Calu3 (cell line): ENCODE measurements at regions of chr14 and their contacts with region 1.

Region 1: GRCh38 chr14:34502494-34503225 is 36.8 kb downstream of the EAPP start:
- DNase-seq: no peak
- H3K4me3 Mint-ChIP-seq: no peak overlapping the region
- H3K27ac Mint-ChIP-seq: no peak overlapping the region
- H3K4me1 Mint-ChIP-seq: peaks cover under 1% of the 10 kb centered on the region
- H3K27me3 Mint-ChIP-seq: no peaks in the 10 kb centered on the region
- CTCF ChIP-seq: no peak

Region 2: GRCh38 chr14:34270361-34270760 is 232.3 kb before region 1 on chr14:
- CTCF ChIA-PET with region 1: no interaction called
- intact Hi-C with region 1: no loop called
- DNase-seq: no peak
- H3K4me3 Mint-ChIP-seq: no peak overlapping the region
- H3K27ac Mint-ChIP-seq: no peak overlapping the region
- H3K4me1 Mint-ChIP-seq: no peaks in the 10 kb centered on the region
- H3K27me3 Mint-ChIP-seq: no peaks in the 10 kb centered on the region
- CTCF ChIP-seq: no peak

Region 3: DNA sequence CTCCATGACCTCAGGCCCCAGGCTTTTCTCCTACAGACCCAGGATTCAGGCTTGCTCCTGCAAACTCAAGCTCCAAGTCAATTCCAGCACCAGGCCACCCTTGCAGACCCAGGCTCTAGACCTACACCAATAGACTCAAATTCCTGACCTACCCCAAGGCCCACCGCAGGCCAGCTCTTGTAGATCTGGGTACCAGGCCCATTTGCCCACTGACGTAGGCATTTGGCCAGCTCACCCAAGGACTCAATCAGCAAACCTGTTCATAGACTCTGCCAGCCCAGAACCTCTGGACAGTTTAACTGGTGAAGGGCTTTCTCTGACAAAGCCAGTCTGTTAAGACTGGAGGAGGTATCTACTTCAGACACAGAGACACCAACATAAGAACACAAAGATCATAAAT is 92.9 kb before region 1 on chr14:
- CTCF ChIA-PET with region 1: interaction called, 10 read pairs
- intact Hi-C with region 1: no loop called
- DNase-seq: no peak
- H3K4me3 Mint-ChIP-seq: no peak overlapping the region
- H3K27ac Mint-ChIP-seq: no peak overlapping the region
- H3K4me1 Mint-ChIP-seq: no peaks in the 10 kb centered on the region
- H3K27me3 Mint-ChIP-seq: no peaks in the 10 kb centered on the region
- CTCF ChIP-seq: no peak

Region 4: GRCh38 chr14:34766606-34767005 is 263.9 kb after region 1 on chr14:
- CTCF ChIA-PET with region 1: no interaction called
- intact Hi-C with region 1: no loop called
- DNase-seq: no peak
- H3K4me3 Mint-ChIP-seq: no peak overlapping the region
- H3K27ac Mint-ChIP-seq: no peak overlapping the region
- H3K4me1 Mint-ChIP-seq: no peaks in the 10 kb centered on the region
- H3K27me3 Mint-ChIP-seq: no peaks in the 10 kb centered on the region
- CTCF ChIP-seq: no peak